Activated naive CD4-positive, alpha-beta T cell treated with anti-CD3 and anti-CD28 coated beads for 36 hours (primary cell): ENCODE measurements at regions of chr11 and their contacts with region 1.

Region 1: GRCh38 chr11:12207384-12208150 is 97.2 kb downstream of the MICAL2 start:
- DNase-seq: peak; percentile 73
- H3K4me3 Mint-ChIP-seq: no peak overlapping the region
- H3K27ac Mint-ChIP-seq: peak overlapping the region; percentile 77
- H3K4me1 Mint-ChIP-seq: peaks cover 53% of the 10 kb centered on the region
- H3K27me3 Mint-ChIP-seq: no peaks in the 10 kb centered on the region

Region 2: GRCh38 chr11:12149672-12150225 is 57.8 kb before region 1 on chr11:
- CTCF ChIA-PET with region 1: no interaction called
- intact Hi-C with region 1: loop called (anchors 1 kb)
- DNase-seq: peak; percentile 80
- H3K4me3 Mint-ChIP-seq: peak overlapping the region; percentile 3
- H3K27ac Mint-ChIP-seq: peak overlapping the region; percentile 87
- H3K4me1 Mint-ChIP-seq: peaks cover 48% of the 10 kb centered on the region
- H3K27me3 Mint-ChIP-seq: no peaks in the 10 kb centered on the region

Region 3: DNA sequence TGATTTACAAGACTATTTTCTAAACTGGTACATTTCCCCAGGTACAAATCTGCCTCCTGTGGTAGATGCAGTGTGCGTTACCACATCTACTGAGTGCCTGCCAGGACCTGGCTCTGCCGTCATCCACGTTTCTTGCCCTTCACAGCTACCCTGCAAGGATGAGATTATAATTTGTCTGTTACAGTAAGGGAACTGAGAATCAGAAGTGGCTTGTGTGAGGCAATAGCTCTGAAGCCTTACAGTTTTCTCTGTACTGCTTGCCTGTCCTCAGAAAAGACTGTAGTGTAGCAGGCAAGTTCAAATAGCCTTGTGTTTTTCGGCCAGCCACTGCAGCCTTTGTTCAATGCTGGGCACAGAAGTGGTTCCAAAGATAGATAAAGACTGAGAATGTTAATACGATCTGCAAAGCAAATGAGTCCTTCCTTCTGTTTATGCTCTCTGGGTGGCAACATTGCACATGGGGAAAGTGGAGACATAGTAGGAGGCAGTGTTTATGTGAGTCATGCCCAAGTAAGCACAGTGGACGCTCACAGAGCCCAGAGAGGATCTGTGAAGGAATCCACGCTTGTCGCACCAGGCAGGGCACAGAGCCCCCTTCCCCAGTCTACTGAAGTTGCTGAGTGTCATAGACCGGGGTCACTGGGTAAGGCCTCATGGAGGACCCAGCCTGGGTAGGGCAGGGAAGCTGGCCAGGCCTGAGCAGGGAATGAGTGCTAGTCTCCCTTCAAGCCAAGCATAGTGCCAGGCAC is 48.0 kb before region 1 on chr11:
- CTCF ChIA-PET with region 1: interaction called, 4 read pairs
- intact Hi-C with region 1: loop called (anchors 1 kb)
- DNase-seq: no peak
- H3K4me3 Mint-ChIP-seq: no peak overlapping the region
- H3K27ac Mint-ChIP-seq: no peak overlapping the region
- H3K4me1 Mint-ChIP-seq: peaks cover 42% of the 10 kb centered on the region
- H3K27me3 Mint-ChIP-seq: no peaks in the 10 kb centered on the region

Region 4: DNA sequence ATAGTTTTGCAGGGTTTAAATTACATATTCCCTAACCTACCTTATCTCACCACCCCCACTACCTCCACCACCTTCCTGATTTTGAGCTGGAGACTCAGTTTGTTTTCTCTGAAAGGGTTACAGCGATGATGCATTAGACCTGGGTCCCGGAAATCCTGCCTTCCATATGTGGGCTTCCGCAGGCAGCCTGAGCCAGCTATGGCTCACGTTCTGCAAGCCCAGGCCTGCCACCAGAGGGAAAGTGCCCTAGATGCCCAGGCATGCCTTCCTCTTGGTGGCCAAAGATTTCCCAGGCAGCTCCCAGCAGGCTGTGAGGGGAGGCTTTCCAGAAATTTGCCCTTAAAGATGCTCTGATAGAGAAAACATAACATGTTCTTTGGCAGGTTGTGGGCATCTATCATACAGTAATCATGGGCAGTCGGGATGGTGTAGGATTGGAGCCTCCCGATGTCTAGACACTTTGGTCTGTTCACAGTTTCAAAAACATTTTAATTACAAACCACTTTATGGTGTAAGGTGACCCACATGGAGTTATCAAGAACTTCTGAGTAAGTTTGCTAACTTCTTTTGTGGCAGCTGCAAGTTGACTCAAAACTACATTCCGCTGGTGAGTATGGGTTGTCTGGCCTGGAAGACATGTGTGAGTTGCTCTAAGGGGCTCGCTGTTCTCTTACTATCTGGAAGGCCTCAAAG is 17.9 kb before region 1 on chr11:
- CTCF ChIA-PET with region 1: no interaction called
- intact Hi-C with region 1: loop called (anchors 1 kb)
- DNase-seq: no peak
- H3K4me3 Mint-ChIP-seq: no peak overlapping the region
- H3K27ac Mint-ChIP-seq: peak overlapping the region; percentile 55
- H3K4me1 Mint-ChIP-seq: peaks cover 44% of the 10 kb centered on the region
- H3K27me3 Mint-ChIP-seq: no peaks in the 10 kb centered on the region

Region 5: GRCh38 chr11:12195768-12196167 is 11.8 kb before region 1 on chr11:
- CTCF ChIA-PET with region 1: interaction called, 7 read pairs
- intact Hi-C with region 1: loop called (anchors 1 kb)
- DNase-seq: peak; percentile 72
- H3K4me3 Mint-ChIP-seq: peak overlapping the region; percentile 79
- H3K27ac Mint-ChIP-seq: peak overlapping the region; percentile 90
- H3K4me1 Mint-ChIP-seq: peaks cover 70% of the 10 kb centered on the region
- H3K27me3 Mint-ChIP-seq: no peaks in the 10 kb centered on the region

Region 6: GRCh38 chr11:12224537-12224893 is 16.9 kb after region 1 on chr11:
- CTCF ChIA-PET with region 1: interaction called, 5 read pairs
- intact Hi-C with region 1: loop called (anchors 1 kb)
- DNase-seq: peak; percentile 97
- H3K4me3 Mint-ChIP-seq: peak overlapping the region; percentile 64
- H3K27ac Mint-ChIP-seq: peak overlapping the region; percentile 82
- H3K4me1 Mint-ChIP-seq: peaks cover 31% of the 10 kb centered on the region
- H3K27me3 Mint-ChIP-seq: no peaks in the 10 kb centered on the region

Region 7: DNA sequence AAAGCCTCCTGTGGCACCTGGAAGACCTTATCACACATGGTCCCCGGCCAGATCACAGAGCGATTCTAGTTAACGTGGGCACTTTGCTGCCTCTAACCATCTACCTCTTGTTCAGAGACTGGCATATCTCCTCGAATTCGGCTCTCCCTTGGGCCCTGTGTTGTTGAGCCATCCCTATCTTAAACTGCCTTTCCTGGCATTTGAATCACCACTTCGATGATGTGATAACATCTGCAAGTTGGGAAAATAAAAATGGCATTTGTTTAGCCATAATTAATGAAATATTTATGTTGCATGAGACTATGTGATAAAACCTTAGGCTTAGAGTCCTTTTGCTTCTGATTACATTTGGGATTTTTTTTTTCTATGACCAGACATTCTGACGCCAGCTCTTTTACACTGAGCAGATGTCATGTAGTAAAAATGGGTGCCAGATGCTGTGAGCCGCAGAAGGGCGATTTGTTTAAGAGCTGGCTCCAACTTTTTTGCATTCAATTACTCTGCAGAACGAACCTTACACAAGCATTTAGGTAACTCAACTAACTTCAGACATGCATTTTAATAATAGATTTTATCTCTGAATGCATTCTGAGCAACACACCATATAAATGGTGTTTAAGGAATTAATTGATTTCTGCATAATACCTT is 111.3 kb after region 1 on chr11:
- CTCF ChIA-PET with region 1: no interaction called
- intact Hi-C with region 1: no loop called
- DNase-seq: no peak
- H3K4me3 Mint-ChIP-seq: no peak overlapping the region
- H3K27ac Mint-ChIP-seq: no peak overlapping the region
- H3K4me1 Mint-ChIP-seq: peaks cover 7% of the 10 kb centered on the region
- H3K27me3 Mint-ChIP-seq: no peaks in the 10 kb centered on the region

Region 8: DNA sequence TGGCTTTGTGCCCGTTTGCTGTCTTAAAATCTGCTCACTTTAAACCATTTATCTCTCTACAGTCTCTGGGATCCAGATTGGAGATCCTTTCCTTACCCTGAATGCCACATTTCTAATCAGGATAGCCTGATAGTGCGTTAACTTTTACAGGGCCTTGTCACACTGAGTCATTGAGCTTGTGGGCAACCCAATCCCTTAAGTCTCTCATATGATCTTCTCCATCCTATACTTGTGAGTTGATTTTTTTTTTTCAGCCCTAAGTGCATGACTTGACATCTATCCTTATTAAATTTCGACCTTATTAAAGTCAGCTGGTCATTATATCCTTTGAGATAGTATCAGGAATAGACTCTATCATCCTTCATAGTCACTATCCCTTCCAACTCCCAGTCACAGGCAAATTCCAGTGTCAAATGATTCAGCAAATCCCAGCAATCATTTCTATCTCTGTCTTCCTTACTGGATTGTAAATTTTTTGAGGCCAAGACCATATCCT is 524.3 kb after region 1 on chr11:
- CTCF ChIA-PET with region 1: no interaction called
- intact Hi-C with region 1: no loop called
- DNase-seq: no peak
- H3K4me3 Mint-ChIP-seq: no peak overlapping the region
- H3K27ac Mint-ChIP-seq: no peak overlapping the region
- H3K4me1 Mint-ChIP-seq: no peaks in the 10 kb centered on the region
- H3K27me3 Mint-ChIP-seq: peaks cover 18% of the 10 kb centered on the region